Colonic mucosa (tissue), 4 donors: ENCODE measurements at regions of chr2 and their contacts with region 1.

Region 1: DNA sequence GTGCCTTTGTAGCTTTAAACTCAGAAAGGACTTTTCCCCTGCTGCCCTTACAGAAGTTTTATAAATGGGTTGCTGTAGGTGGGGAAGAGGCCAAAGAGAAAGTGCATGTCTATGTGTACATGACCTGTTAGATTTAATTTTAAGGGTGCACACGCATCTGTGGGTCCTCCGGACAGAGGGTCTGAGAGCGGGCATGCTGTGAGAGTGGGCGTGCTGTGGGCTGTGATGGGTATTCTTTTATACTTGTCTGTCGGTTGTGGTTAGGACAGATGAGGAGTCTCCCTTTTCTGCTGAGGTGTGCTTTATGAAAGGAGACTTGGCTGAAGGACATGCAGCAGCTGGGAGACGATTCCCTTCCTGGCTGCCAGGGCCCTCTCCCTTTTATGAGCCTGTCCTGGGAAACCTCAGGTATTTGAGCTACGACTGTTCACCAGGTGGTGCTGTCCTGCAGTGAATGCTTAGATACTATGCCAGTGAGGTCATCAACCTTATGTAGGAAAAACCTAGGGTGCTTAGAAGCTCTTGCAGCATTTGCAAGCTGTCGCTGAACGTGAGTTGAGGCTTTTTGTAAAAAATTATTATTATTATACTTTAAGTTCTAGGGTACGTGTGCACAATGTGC is 67.5 kb downstream of the TANC1 start:
- DNase-seq: peak; percentile 65
- H3K4me3 ChIP-seq: no peak overlapping the region
- H3K27ac ChIP-seq: peak overlapping the region; percentile 27
- H3K4me1 ChIP-seq: no peaks in the 10 kb centered on the region
- H3K27me3 ChIP-seq: no peaks in the 10 kb centered on the region
- CTCF ChIP-seq: no peak

Region 2: GRCh38 chr2:159118115-159118858 is 82.4 kb after region 1 on chr2:
- intact Hi-C with region 1: loop called (anchors 5 kb)
- DNase-seq: peak; percentile 92
- H3K4me3 ChIP-seq: no peak overlapping the region
- H3K27ac ChIP-seq: no peak overlapping the region
- H3K4me1 ChIP-seq: peaks cover 4% of the 10 kb centered on the region
- H3K27me3 ChIP-seq: no peaks in the 10 kb centered on the region
- CTCF ChIP-seq: peak; percentile 95

Region 3: DNA sequence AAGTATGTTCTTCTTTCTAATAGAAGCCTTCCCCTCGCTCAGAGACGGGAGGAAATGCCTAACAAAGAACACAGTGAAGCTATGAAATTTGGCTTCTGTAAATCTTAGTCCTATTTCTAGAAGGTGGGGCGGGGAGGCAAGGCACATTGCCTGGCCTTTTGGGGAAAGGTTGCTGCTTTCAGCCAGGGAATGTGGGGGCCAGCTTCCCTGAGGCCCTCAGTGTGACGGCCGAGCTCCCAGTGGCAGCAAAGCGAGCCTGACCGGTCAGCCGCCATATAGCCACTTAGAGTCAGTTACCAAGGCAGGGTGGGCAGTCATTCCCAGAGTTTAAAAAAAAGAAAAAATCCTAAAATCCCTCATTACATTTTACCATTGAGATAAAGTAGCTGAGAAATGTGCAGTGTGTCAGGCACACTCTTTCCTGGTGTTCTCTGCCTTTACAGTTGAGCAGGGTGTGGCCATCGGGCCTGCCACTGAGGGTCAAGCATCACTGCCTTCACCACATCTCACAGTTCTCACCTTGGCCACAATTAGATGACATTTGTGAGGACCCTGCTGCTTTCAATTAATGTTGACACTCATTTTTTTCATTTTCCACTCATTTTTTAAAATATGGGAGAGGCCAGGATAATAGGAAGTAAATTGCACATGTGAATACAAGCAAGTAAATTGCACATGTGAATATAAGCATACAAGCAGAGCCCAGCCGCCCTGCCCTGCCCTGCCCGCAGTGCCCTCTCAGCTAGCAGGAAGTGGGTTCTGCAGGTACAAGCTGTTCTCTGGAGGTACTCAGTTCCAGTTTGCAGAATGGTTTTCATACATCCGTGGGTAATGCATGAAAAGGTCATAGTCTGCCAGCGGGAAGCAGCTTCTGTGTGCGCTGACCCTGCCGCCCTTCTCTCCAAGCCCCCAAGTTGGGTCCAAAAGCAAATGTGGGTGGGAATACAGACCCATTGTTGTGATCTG is 173.7 kb after region 1 on chr2:
- intact Hi-C with region 1: no loop called
- DNase-seq: peak; percentile 35
- H3K4me3 ChIP-seq: no peak overlapping the region
- H3K27ac ChIP-seq: no peak overlapping the region
- H3K4me1 ChIP-seq: peaks cover 6% of the 10 kb centered on the region
- H3K27me3 ChIP-seq: no peaks in the 10 kb centered on the region
- CTCF ChIP-seq: no peak

Region 4: GRCh38 chr2:159445307-159445706 is 409.4 kb after region 1 on chr2:
- intact Hi-C with region 1: no loop called
- DNase-seq: no peak
- H3K4me3 ChIP-seq: no peak overlapping the region
- H3K27ac ChIP-seq: no peak overlapping the region
- H3K4me1 ChIP-seq: no peaks in the 10 kb centered on the region
- H3K27me3 ChIP-seq: no peaks in the 10 kb centered on the region
- CTCF ChIP-seq: no peak